PC-9 (cell line): ENCODE measurements at regions of chr19 and their contacts with region 1.

Region 1: DNA sequence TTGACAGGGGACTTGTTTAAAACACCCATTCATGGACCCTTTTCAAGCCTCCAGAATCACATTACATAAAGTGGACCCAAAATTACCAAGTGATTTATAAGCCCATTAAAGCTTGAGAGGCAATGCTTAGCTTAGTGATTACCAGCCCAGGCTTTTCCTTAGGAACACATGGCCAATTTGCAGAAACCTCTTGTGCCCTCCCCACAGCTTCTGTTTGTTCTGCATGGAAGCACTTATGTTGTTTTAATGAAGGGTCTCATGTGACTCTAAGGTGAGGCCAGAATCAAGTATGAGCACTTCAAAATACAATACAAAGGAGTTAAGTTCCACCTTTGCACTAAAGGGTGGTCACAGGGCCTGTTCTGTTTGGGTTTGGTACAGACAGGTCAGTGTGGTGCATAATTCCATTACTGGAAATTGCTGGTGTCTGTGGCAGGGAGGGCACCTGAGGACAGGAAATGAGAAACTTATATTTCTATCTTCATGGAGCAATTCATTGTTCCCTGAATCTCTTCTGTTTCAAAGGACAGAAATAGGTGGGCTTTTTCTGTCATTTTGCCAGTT is 15.3 kb downstream of the ZNF486 start:
- DNase-seq: no peak
- H3K4me3 ChIP-seq: no peak overlapping the region
- H3K27ac ChIP-seq: no peak overlapping the region
- H3K4me1 ChIP-seq: no peaks in the 10 kb centered on the region
- H3K27me3 ChIP-seq: no peaks in the 10 kb centered on the region
- CTCF ChIP-seq: no peak

Region 2: DNA sequence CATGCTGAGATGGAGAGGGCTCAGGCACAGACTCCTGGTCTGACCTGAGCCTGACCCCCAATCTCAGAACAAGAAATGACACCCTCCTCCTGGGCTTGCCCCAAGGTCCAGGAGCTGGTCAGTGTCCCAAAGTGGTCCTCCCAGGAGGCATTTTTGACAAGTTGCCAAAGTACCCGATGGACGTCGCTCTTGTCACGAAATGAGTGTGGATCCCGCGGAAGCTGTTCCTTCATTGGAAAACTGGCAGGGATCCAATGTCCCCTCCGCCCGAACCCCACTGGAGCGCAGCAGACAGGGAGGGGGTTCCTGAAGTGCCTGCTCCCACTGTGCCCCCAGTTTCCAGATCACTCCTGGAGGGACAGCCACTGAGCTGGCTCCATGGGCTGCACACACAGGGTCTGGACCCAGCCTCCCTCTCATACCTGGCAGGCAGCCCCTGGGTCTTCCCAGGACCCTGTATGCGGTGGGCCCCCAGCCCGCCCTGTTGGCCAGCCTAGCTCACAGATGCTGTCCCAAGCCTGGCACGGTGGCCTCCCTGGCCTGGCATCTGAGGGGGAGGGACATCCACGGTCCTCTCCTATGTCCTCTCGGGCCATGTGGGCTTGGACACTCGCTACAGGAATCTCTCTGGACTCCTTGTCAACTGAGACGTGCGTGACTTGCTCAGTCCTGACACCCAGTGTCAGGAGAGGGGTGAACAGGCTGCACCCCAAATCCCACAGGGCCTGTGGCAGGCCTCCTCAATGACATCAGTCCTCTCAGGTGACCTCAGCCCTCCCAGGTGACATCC is 436.6 kb before region 1 on chr19:
- CTCF ChIA-PET with region 1: no interaction called
- POLR2A ChIA-PET with region 1: no interaction called
- intact Hi-C with region 1: no loop called
- DNase-seq: no peak
- H3K4me3 ChIP-seq: no peak overlapping the region
- H3K27ac ChIP-seq: no peak overlapping the region
- H3K4me1 ChIP-seq: no peaks in the 10 kb centered on the region
- H3K27me3 ChIP-seq: peaks cover 50% of the 10 kb centered on the region
- CTCF ChIP-seq: no peak

Region 3: GRCh38 chr19:20103091-20103740 is 79.1 kb before region 1 on chr19:
- CTCF ChIA-PET with region 1: no interaction called
- POLR2A ChIA-PET with region 1: interaction called, 29 read pairs
- intact Hi-C with region 1: no loop called
- DNase-seq: no peak
- H3K4me3 ChIP-seq: no peak overlapping the region
- H3K27ac ChIP-seq: no peak overlapping the region
- H3K4me1 ChIP-seq: no peaks in the 10 kb centered on the region
- H3K27me3 ChIP-seq: no peaks in the 10 kb centered on the region
- CTCF ChIP-seq: no peak

Region 4: GRCh38 chr19:20124879-20125278 is 57.4 kb before region 1 on chr19:
- CTCF ChIA-PET with region 1: no interaction called
- POLR2A ChIA-PET with region 1: no interaction called
- intact Hi-C with region 1: no loop called
- DNase-seq: no peak
- H3K4me3 ChIP-seq: no peak overlapping the region
- H3K27ac ChIP-seq: no peak overlapping the region
- H3K4me1 ChIP-seq: no peaks in the 10 kb centered on the region
- H3K27me3 ChIP-seq: no peaks in the 10 kb centered on the region
- CTCF ChIP-seq: no peak

Region 5: DNA sequence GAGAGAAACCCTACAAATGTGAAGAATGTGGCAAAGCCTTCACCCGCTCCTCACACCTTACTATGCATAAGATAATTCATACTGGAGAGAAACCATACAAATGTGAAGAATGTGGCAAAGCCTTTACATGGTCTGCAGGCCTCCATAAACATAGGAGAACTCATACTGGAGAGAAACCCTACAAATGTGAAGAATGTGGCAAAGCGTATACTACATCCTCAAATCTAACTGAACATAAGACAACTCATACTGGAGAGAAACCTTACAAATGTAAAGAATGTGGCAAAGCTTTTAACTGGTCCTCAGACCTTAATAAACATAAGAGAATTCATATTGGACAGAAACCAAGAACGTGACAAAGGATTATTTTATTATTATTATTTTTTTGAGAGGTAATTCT is 15.4 kb after region 1 on chr19:
- CTCF ChIA-PET with region 1: no interaction called
- POLR2A ChIA-PET with region 1: no interaction called
- intact Hi-C with region 1: no loop called
- DNase-seq: no peak
- H3K4me3 ChIP-seq: no peak overlapping the region
- H3K27ac ChIP-seq: no peak overlapping the region
- H3K4me1 ChIP-seq: no peaks in the 10 kb centered on the region
- H3K27me3 ChIP-seq: no peaks in the 10 kb centered on the region
- CTCF ChIP-seq: no peak